ENCODE measurements at regions of chr2 and their contacts with region 1.

Region 1: DNA sequence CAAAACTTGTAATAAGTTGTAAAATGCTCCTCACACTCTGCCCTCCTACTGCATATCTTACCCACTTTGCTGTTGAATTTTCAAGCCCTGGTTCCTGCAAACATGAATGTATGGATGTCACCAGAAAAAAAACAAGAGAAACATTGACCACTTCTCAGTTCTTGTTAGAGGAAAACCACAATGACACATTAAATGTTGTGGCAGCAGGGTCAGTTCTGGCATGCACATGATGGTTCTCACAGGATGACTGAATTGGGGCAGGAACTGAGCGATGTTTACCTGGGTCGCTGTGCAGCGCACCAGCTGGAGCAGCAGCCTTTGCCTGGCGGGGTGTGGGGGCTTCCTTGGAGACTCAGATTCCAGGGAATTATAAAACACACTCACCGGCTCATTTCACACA is 14.0 kb upstream of the PRKCE start:
- DNase-seq: no peak
- H3K4me3 ChIP-seq: no peak overlapping the region
- H3K27ac ChIP-seq: no peak overlapping the region
- H3K4me1 ChIP-seq: no peaks in the 10 kb centered on the region
- CTCF ChIP-seq: no peak

Region 2: GRCh38 chr2:45651415-45652089 is 14.1 kb after region 1 on chr2 and contains the start of gene PRKCE:
- CTCF ChIA-PET with region 1: no interaction called
- POLR2A ChIA-PET with region 1: no interaction called
- intact Hi-C with region 1: no loop called
- DNase-seq: peak; percentile 39
- H3K4me3 ChIP-seq: peak within 1 kb of the TSS; percentile 89
- H3K27ac ChIP-seq: peak within 1 kb of the TSS; percentile 18
- H3K4me1 ChIP-seq: peaks cover 19% of the 10 kb centered on the region
- CTCF ChIP-seq: no peak
- total RNA-seq, gene PRKCE: 13.6 and 17.0 TPM in 2 replicates

Region 3: DNA sequence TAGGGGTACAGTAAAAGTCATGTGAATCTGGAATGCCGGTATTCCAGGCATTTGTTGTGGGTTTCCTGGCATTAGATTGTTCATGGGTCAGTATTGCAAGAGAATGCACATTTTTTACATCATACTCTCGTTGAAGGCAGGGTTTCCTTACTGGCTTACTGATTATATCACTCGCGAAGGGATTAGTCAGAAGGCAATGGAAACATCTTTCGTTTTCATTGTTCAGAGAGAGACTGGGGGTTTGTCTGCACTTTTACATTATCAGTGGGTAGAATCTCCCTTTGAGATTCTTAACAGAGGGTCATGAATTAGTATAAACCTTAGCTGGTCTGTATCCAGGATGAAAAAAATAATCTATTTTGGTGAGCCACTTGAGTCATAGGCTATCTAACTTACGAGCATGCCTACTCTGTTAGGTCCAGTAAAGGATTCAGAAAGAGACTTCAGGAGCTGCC is 430.4 kb after region 1 on chr2:
- CTCF ChIA-PET with region 1: no interaction called
- POLR2A ChIA-PET with region 1: no interaction called
- intact Hi-C with region 1: loop called (anchors 5 kb)
- DNase-seq: no peak
- H3K4me3 ChIP-seq: no peak overlapping the region
- H3K27ac ChIP-seq: no peak overlapping the region
- H3K4me1 ChIP-seq: no peaks in the 10 kb centered on the region
- CTCF ChIP-seq: no peak

Measured in OCI-LY7 (cell line).